ENCODE measurements at regions of chr10 and their contacts with region 1.

Region 1: DNA sequence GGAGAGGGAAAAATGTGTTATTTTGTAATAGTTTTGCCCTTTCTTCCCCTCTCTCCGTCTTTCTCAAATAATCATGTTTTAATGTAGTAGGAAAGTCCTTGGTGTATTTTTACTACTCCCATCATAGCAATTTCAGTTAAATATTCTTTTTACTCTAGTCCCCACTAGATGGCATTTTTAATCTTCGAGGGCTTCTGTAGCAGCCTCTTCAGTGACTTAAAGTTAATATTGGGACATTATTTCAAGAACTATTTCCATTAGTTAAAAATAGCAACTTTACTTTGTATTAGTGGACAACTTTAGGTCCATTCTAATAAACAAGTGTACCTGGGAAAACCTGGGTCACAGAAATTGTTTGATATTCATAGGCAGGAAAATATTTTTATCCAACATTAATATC is 23.0 kb downstream of the EDRF1 start:
- DNase-seq: peak; percentile 29
- H3K4me3 ChIP-seq: no peak overlapping the region
- H3K27ac ChIP-seq: no peak overlapping the region
- H3K4me1 ChIP-seq: no peaks in the 10 kb centered on the region
- H3K27me3 ChIP-seq: no peaks in the 10 kb centered on the region
- CTCF ChIP-seq: no peak
- POLR2A ChIP-seq: no peak

Region 2: DNA sequence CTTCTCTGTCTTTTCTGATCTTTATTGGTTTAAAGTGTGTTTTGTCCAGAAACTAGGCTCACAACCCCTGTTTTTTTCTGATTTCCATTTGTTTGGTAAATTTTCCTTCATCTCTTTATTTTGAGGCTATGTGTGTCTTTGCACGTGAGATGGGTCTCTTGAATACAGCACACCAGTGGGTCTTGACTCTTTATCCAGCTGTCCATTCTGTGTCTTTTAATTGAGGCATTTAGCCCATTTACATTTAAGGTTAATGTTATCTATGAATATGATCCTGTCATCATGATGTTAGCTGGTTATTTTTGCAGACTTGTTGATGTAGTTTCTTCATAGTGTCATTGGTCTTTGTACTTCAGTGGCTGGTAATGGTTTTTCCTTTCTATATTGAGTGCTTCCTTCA is 69.6 kb before region 1 on chr10:
- CTCF ChIA-PET with region 1: no interaction called
- POLR2A ChIA-PET with region 1: no interaction called
- dilution Hi-C with region 1: no loop called
- intact Hi-C with region 1: no loop called
- DNase-seq: no peak
- H3K4me3 ChIP-seq: no peak overlapping the region
- H3K27ac ChIP-seq: no peak overlapping the region
- H3K4me1 ChIP-seq: no peaks in the 10 kb centered on the region
- H3K27me3 ChIP-seq: no peaks in the 10 kb centered on the region
- CTCF ChIP-seq: no peak
- POLR2A ChIP-seq: no peak

Region 3: DNA sequence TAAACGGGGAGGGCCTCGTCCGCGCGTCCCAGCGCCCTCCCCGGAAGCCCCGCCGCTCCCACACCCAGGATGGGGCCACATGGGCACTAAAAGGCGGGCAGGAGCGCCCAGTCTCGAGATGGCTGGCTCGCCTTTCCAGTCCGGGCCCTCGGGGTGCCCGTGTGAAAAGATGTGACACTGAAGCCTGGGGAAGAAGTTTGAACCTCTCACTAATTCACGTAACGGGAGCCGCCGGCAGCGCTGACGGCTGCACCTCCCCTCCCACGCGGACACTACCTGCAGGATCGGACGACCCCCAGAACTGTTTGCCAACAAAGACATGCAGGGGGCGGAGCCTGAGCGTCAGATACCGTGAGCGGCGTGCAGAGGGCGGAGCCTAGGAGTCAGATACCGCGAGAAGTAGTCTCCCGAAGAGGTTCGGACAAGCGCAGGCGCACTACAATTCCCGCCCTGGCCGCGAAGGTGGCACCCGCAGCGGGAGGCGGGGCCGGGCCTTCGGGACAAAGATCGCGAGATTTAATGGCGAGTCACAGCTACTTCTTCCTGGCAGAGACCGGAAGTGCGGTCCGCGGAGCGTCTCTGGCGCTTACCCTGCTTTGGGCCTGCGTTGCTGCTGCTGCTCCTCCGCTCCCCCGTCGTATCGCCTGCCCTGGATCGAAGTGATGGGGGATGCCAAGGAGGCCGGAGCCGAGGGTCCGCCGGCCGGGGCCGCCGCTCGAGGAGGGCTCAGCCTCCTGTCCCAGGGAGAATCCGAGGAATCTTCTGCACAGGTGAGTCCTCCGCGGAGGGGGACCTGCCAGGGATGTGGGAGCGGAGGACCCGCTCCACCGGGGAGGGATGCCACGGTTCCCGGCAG is 23.1 kb before region 1 on chr10 and contains the start of gene EDRF1:
- CTCF ChIA-PET with region 1: no interaction called
- POLR2A ChIA-PET with region 1: no interaction called
- dilution Hi-C with region 1: no loop called
- intact Hi-C with region 1: no loop called
- DNase-seq: peak; percentile 100
- H3K4me3 ChIP-seq: peak within 1 kb of the TSS; percentile 65 to 98 (median 93)
- H3K27ac ChIP-seq: peak within 1 kb of the TSS; percentile 67
- H3K4me1 ChIP-seq: peaks cover 6% of the 10 kb centered on the region
- H3K27me3 ChIP-seq: no peaks in the 10 kb centered on the region
- CTCF ChIP-seq: no peak
- POLR2A ChIP-seq: peak; percentile 97
- total RNA-seq, gene EDRF1: 24.7 and 27.8 TPM in 2 replicates

Region 4: GRCh38 chr10:125822878-125823662 is 80.6 kb after region 1 on chr10 and contains the starts of genes BCCIP and UROS:
- CTCF ChIA-PET with region 1: no interaction called
- POLR2A ChIA-PET with region 1: no interaction called
- dilution Hi-C with region 1: no loop called
- intact Hi-C with region 1: loop called (anchors 5 kb)
- DNase-seq: peak; percentile 90
- H3K4me3 ChIP-seq: peak within 1 kb of the TSS; percentile 78 to 83 (median 79)
- H3K27ac ChIP-seq: peak within 1 kb of the TSS; percentile 89
- H3K4me1 ChIP-seq: peaks cover 18% of the 10 kb centered on the region
- H3K27me3 ChIP-seq: no peaks in the 10 kb centered on the region
- CTCF ChIP-seq: no peak
- POLR2A ChIP-seq: no peak
- total RNA-seq, gene BCCIP: 61.3 and 73.5 TPM in 2 replicates
- total RNA-seq, gene UROS: 38.4 and 40.2 TPM in 2 replicates

Region 5: GRCh38 chr10:126387023-126387921 is 644.8 kb after region 1 on chr10:
- CTCF ChIA-PET with region 1: no interaction called
- POLR2A ChIA-PET with region 1: no interaction called
- dilution Hi-C with region 1: no loop called
- intact Hi-C with region 1: loop called (anchors 10 kb)
- DNase-seq: peak; percentile 48
- H3K4me3 ChIP-seq: no peak overlapping the region
- H3K27ac ChIP-seq: no peak overlapping the region
- H3K4me1 ChIP-seq: no peaks in the 10 kb centered on the region
- H3K27me3 ChIP-seq: peaks cover 3 to 22% of the 10 kb centered on the region in 2 experiments
- CTCF ChIP-seq: peak; percentile 66 to 73
- POLR2A ChIP-seq: no peak